ENCODE measurements at regions of chr13 and their contacts with region 1.

Region 1: DNA sequence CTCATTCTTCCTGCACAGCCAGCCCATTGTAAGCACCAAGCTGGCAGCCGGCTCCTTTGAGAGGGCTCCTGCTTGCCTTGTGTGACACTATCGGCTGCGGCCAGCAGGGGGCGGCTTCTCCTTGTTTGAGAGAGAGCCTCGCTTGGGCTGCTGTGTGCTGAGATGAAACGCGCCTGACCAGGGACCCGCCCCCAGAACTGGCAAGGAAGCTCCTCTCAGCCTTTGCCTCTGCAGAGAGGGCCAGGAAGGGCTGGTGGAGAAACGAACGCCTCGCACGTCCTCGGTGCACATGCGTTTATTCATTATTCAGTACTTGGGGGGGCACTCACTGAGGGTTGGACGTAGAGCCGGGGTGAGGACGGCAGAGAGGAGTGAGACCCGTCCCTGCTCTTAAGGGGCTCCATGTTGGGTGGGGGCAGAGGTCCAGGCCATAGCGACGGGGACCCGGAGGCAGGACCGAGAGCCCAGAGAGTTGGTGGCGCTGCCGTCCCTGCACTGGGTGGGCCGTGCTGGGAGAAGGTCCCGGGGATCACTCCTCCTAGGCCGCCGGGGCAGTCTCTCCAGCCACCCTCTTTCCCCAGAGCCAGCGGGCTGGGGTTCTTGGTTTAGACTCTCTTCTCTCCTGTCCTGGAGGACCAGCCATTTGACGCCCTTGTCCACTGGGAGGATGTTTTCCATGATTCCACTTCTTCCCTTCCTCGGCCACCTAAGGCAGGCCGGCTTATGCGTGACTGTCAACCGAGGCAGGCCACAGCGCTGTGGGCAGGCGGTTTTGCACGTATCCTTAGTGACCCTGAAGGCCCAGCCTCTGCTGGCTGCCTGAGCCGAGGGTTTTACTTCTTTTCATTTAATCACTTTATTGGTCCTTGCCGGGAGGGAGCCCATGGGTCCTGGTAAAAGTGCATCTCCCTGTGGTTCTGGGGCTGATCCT is 174.5 kb downstream of the KATNAL1 start:
- DNase-seq: peak; percentile 96
- ATAC-seq: peak; percentile 94 to 98 (median 96)
- H3K4me3 ChIP-seq: no peak overlapping the region
- H3K27ac ChIP-seq: peak overlapping the region in 1 of 10 donors; percentile 15
- H3K4me1 ChIP-seq: peaks cover 0 to 20% (median 4%) of the 10 kb centered on the region in 9 donors
- H3K27me3 ChIP-seq: no peaks in the 10 kb centered on the region
- CTCF ChIP-seq: peak; percentile 83 to 97 (median 95)

Region 2: DNA sequence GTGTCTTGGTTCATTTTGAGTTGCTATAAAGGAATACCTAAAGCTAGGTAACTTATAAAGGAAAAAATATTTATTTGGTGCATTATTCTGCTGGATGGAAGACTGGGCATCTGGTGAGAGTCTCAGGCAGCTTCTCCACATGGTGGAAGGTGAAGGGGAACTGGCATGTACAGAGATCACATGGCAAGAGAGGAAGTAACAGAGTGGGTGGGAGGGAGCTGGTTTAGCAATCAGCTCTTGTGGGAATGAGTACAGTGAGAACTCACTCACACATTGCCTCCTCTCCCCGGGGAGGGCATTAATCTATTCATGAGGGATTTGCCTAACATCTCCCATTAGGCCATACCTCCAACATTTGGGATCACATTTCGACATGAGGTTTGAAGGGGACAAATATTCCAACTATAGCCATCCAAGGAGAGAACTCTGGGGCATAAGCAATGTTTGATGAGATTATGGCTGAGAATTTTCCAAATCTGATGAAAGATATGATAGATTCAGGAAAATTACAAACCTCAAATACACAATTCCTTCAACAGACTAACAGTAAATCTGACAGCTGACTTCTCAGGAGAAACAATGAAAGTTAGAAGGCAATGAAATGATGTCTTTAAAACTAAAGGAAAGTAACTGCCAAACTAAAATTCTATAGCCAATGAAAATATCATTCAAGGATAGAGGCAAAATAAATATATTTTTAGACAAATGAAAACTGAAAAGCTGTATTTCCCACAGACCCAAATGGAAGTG is 1260.3 kb before region 1 on chr13:
- intact Hi-C with region 1: no loop called
- DNase-seq: no peak
- ATAC-seq: no peak
- H3K4me3 ChIP-seq: no peak overlapping the region
- H3K27ac ChIP-seq: no peak overlapping the region
- H3K4me1 ChIP-seq: peaks cover 0 to 9% (median 0%) of the 10 kb centered on the region in 9 donors
- H3K27me3 ChIP-seq: no peaks in the 10 kb centered on the region
- CTCF ChIP-seq: no peak

Region 3: DNA sequence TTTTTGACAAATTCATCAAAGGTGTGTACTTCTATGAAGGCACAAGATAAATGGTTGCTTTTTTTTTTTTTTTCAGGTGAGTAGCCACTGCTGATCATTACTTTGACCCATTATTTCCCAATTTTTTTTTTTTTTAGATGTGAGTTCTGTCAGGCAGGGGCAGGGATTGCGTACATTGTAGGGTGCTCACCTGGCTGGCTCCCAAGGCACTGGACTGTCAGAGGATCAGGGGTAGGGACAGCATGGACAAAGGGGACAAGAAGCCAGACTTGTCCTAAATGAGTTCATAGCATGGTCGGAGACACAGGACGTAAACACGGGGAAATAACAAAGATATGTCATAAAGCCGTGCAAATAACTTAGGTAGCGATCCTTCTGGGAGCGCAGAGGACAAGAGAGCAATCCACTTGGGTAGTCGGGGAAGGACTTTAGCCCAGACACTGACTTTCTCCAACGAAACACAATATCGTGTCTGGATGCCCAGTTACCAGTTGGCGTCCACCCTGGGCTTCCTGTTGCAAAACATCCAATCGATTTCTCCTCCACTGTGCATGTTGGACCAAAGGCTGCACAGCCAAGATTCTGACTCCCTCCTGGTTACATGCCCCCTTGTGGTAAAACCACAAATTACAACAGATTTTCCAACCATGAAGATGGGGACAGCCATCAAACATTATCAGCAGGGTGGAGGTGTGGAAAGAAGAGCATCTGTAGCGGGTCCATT is 201.9 kb after region 1 on chr13:
- intact Hi-C with region 1: loop called in 3 of 10 experiments (anchors 10 kb)
- DNase-seq: no peak
- ATAC-seq: no peak
- H3K4me3 ChIP-seq: no peak overlapping the region
- H3K27ac ChIP-seq: no peak overlapping the region
- H3K4me1 ChIP-seq: peaks cover 0 to 11% (median 4%) of the 10 kb centered on the region in 9 donors
- H3K27me3 ChIP-seq: no peaks in the 10 kb centered on the region
- CTCF ChIP-seq: peak; percentile 18 to 57 (median 43)

Region 4: GRCh38 chr13:30453727-30454126 is 320.8 kb after region 1 on chr13:
- intact Hi-C with region 1: loop called in 5 of 10 experiments (anchors 5 to 10 kb)
- DNase-seq: no peak
- ATAC-seq: no peak
- H3K4me3 ChIP-seq: no peak overlapping the region
- H3K27ac ChIP-seq: no peak overlapping the region
- H3K4me1 ChIP-seq: peaks cover 0 to 3% (median 0%) of the 10 kb centered on the region in 9 donors
- H3K27me3 ChIP-seq: no peaks in the 10 kb centered on the region
- CTCF ChIP-seq: peak in 2 of 9 donors; percentile 6 to 9

Region 5: DNA sequence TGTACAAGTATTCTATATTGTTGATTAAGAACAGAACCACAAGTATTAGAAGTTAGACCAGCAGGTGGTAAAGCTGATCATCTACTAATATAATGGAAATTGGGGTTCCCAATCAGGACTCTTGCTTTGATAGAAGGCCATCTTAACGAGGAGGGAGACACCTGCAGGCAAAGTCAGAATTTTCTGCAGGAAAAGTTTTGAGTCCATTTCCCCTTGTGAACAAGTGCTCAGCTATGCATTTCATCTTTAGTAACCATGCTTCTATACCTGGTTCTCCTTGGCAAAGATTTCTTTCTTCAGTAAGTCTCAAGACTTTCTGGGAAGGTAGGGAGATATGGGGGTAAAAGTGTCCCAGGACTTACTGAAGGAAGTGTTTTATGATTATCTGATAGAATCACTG is 448.7 kb after region 1 on chr13:
- intact Hi-C with region 1: loop called in 3 of 10 experiments (anchors 10 kb)
- DNase-seq: no peak
- ATAC-seq: no peak
- H3K4me3 ChIP-seq: no peak overlapping the region
- H3K27ac ChIP-seq: peak overlapping the region in 3 of 10 donors; percentile 7 to 44 (median 24)
- H3K4me1 ChIP-seq: peaks cover 0 to 17% (median 4%) of the 10 kb centered on the region in 9 donors
- H3K27me3 ChIP-seq: no peaks in the 10 kb centered on the region
- CTCF ChIP-seq: peak in 7 of 9 donors; percentile 13 to 49 (median 33)

Region 6: GRCh38 chr13:30802953-30803478 is 670.1 kb after region 1 on chr13:
- intact Hi-C with region 1: loop called in 9 of 10 experiments (anchors 5 to 10 kb)
- DNase-seq: peak; percentile 82 to 88
- ATAC-seq: peak; percentile 95 to 98 (median 96)
- H3K4me3 ChIP-seq: peak overlapping the region in 9 of 10 donors; percentile 26 to 57 (median 50)
- H3K27ac ChIP-seq: peak overlapping the region in 5 of 10 donors; percentile 10 to 61 (median 40)
- H3K4me1 ChIP-seq: peaks cover 0 to 28% (median 23%) of the 10 kb centered on the region in 9 donors
- H3K27me3 ChIP-seq: no peaks in the 10 kb centered on the region
- CTCF ChIP-seq: peak; percentile 86 to 99 (median 97)

Region 7: DNA sequence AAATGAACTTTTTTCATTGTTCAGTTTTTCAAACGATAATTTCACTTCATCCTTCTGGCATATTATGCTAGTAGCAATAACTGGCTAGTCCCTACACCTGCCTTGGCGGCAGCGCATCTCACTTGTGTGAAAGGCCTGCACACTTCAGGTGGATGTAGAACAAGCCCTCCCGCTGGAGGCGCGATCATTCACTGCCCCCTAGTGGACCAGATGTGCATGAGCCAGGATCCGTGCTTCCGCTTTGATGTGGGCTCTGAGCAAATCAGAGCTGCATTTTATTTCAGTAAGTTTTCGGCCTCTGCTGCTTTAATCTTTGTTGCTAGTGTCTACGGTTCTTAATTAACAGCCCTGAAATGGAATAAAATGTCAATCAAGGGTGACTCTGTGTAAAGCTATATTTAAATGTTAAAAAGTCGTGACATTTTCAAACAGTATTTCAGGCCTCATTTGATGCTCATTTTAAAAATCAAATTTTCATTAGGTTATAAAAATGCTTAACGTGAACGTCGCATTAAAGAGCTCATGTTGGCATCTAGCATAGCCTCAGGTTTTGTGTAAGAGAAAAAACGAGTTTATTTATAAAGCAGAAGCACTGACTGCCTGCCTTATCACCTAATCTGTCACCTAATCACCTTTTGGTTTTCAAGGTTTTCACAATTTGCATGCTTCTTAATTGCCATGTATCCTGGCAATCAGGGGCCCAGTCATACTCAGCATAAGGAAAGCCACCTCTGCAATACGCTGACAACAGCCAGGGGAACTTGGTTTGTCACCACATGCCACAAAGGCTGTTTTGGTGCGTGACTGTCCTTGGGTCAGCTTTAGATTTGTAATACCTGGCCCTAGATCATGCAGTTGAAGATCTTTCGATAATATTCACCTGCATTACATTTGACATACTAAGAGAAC is 911.7 kb after region 1 on chr13:
- intact Hi-C with region 1: loop called in 3 of 10 experiments (anchors 10 kb)
- DNase-seq: peak; percentile 70 to 73
- ATAC-seq: peak; percentile 73 to 92 (median 88)
- H3K4me3 ChIP-seq: no peak overlapping the region
- H3K27ac ChIP-seq: peak overlapping the region in 1 of 10 donors; percentile 79
- H3K4me1 ChIP-seq: peaks cover 3 to 34% (median 19%) of the 10 kb centered on the region in 9 donors
- H3K27me3 ChIP-seq: peaks cover 0 to 11% (median 0%) of the 10 kb centered on the region in 7 donors
- CTCF ChIP-seq: peak; percentile 88 to 98 (median 94)